GM13977 (cell line): ENCODE measurements at regions of chr18 and their contacts with region 1.

Region 1: GRCh38 chr18:55234366-55235093 is 275.3 kb upstream of the CCDC68 start:
- DNase-seq: peak; percentile 31
- CTCF ChIP-seq: peak; percentile 77

Region 2: DNA sequence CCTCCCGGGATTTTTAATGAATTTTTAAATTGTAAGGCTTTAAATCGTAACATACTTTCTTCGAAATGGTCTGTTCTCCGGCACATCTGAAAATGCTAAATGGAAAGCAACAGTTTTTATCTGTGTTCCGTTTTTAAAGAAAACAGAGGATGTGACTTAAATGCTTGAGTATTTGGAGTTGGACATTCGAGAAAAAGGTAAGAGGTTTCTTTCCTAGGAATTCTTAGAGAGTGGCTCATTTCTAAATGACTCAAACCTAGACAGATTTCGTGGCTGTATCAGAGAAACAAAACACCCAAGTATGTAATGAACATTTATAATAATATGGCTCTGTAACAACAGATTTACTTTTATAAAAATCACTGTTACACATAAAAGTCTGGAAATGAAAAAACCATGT is 97.7 kb before region 1 on chr18:
- in situ Hi-C with region 1: no loop called
- DNase-seq: no peak
- CTCF ChIP-seq: no peak

Region 3: GRCh38 chr18:55509631-55510324 is 275.2 kb after region 1 on chr18:
- in situ Hi-C with region 1: loop called (anchors 25 kb)
- DNase-seq: peak; percentile 61
- CTCF ChIP-seq: no peak